Esophagus muscularis mucosa (tissue), 4 donors: ENCODE measurements at regions of chr6 and their contacts with region 1.

Region 1: DNA sequence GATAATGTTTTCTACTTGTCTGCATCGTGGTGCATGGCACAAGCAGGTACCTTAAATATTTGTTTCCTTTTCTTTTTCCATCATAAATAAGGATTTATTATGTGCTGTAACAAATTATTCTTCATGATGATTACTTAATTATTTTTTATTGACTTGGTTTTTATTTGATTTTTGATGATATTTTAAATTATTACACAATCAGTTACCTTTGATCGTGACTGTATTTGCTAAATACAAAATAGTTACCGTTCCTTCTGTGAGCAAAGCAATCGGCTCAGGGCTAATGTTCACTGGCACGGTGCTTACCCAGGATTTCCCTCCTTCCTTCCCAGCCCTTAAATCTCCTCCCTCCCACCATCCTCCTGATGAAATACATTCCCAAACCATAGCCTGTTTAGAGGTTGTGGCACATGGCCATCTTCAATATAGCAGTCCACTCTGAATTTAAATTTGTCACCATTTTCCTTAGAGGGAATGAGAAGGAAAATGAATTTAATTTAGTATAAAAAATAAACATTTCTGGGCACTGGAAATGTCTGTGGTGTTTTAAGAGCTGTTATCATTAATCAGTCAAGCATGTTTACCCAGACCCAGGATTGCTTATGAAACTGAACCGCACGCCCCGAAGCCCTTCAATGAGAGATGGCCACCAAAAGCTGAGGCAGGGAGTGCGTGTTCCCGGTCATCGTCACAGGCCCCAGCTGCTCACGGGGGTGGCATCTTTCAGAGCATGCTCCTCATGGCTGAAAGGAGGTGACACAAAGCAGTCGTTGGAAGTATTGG is 23.0 kb upstream of the EXOC2 start:
- DNase-seq: no peak
- H3K4me3 ChIP-seq: no peak overlapping the region
- H3K27ac ChIP-seq: peak overlapping the region; percentile 9 to 57 (median 40)
- H3K4me1 ChIP-seq: peaks cover 5 to 20% (median 15%) of the 10 kb centered on the region in 4 donors
- H3K27me3 ChIP-seq: no peaks in the 10 kb centered on the region
- CTCF ChIP-seq: no peak
- EP300 ChIP-seq: no peak
- POLR2A ChIP-seq: no peak

Region 2: DNA sequence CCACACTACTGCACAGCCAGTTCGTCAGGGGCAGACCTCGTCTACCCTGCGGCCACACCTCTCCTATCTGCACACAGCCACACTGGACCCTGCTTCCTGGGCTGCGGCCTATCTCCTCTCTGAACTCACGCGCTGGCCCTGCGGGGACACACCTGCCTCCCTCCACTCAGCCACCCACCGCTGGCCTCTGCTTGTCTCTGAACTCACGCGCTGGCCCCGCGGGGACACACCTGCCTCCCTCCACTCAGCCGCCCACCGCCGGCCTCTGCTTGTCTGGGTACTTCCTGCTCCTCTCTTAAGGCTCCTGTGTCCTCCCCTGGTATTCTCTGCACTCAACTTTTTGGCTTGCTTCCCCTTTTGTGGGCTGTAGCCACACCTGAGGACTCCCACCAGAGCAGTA is 111.3 kb before region 1 on chr6:
- intact Hi-C with region 1: no loop called
- DNase-seq: no peak
- H3K4me3 ChIP-seq: no peak overlapping the region
- H3K27ac ChIP-seq: no peak overlapping the region
- H3K4me1 ChIP-seq: peaks cover 0 to 4% (median 0%) of the 10 kb centered on the region in 4 donors
- H3K27me3 ChIP-seq: no peaks in the 10 kb centered on the region
- CTCF ChIP-seq: no peak
- EP300 ChIP-seq: no peak
- POLR2A ChIP-seq: no peak

Region 3: GRCh38 chr6:815348-815738 is 99.4 kb after region 1 on chr6:
- intact Hi-C with region 1: no loop called
- DNase-seq: no peak
- H3K4me3 ChIP-seq: no peak overlapping the region
- H3K27ac ChIP-seq: peak overlapping the region; percentile 67 to 78 (median 72)
- H3K4me1 ChIP-seq: peaks cover 5 to 71% (median 53%) of the 10 kb centered on the region in 4 donors
- H3K27me3 ChIP-seq: no peaks in the 10 kb centered on the region
- CTCF ChIP-seq: peak in 2 of 3 experiments; percentile 15 to 31
- EP300 ChIP-seq: no peak
- POLR2A ChIP-seq: no peak

Region 4: DNA sequence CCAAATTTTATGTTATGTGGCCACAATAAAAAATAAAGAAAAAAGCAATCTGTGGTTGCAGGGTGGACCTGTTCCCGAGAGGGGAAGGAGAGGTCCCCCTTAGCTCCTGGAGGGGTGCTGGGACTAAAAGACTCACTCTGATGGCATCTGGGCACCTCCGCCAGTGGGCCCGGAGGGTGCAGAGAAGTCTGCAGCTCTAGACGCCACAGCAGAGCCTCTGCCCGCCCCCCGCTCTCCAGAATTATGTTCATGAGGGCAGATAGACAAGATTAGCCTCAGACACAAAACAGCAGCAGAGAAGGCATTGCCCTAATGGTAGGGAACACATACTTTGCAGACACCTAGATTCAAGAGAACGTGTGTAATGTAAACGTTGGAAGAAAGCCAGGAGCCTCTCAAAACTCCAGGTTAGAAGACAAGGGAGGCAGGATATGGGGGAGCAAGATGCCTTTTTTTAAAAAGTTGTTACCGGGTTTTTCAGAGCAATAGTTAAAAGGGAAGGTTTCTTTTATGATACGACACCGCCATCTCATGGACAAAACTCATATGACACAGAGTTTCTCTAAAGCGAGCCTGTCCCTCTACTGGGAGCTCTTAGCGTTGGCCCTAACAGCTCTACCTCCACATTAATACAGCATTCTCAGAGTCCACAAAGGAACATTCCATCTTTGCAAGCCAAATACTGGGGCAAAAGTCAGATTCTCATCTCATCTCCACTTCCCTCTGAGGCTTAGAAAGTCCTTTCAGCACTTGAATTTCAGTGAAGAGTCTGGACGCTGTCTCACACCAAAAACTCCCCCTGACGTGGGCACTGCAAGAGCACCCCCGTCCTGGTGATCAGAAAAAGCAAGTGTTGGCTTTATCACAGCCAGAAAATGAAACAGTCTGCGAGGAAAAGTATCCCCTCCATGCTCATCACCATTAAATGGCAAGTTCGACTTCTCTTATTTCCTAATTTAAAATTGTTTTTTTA is 720.7 kb after region 1 on chr6:
- intact Hi-C with region 1: loop called (anchors 5 kb)
- DNase-seq: no peak
- H3K4me3 ChIP-seq: no peak overlapping the region
- H3K27ac ChIP-seq: no peak overlapping the region
- H3K4me1 ChIP-seq: peaks cover 0 to 9% (median 5%) of the 10 kb centered on the region in 4 donors
- H3K27me3 ChIP-seq: peaks cover 0 to 17% (median 0%) of the 10 kb centered on the region in 4 donors
- CTCF ChIP-seq: peak; percentile 66 to 86 (median 76)
- EP300 ChIP-seq: no peak
- POLR2A ChIP-seq: no peak